ENCODE measurements at regions of chr3 and their contacts with region 1.

Region 1: DNA sequence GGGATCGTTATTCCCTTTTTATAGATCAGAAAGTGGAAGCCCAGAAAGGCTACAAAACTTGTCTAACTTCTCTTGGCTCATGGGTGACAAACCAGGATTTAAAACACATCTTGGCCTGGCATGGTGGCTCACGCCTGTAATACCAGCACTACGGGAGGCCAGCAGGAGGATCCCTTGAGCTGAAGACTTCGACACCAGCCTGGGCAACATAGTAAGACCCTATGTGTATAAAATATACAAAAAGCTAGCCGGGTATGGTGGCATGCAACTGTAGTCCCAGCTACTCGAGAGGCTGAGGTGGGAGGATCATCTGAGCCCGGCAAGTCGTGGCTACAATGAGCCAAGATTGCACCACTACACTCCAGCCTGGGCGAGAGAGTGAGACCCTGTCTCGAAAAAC is 479.1 kb downstream of the MAGI1 start:
- DNase-seq: no peak
- H3K4me3 ChIP-seq: no peak overlapping the region
- H3K27ac ChIP-seq: no peak overlapping the region
- H3K4me1 ChIP-seq: peaks cover 3% of the 10 kb centered on the region
- H3K27me3 ChIP-seq: no peaks in the 10 kb centered on the region
- CTCF ChIP-seq: no peak
- POLR2A ChIP-seq: no peak

Region 2: GRCh38 chr3:65569845-65570405 is 10.3 kb after region 1 on chr3:
- CTCF ChIA-PET with region 1: interaction called, 11 read pairs
- POLR2A ChIA-PET with region 1: no interaction called
- dilution Hi-C with region 1: no loop called
- intact Hi-C with region 1: no loop called
- DNase-seq: no peak
- H3K4me3 ChIP-seq: no peak overlapping the region
- H3K27ac ChIP-seq: no peak overlapping the region
- H3K4me1 ChIP-seq: no peaks in the 10 kb centered on the region
- H3K27me3 ChIP-seq: no peaks in the 10 kb centered on the region
- CTCF ChIP-seq: no peak
- POLR2A ChIP-seq: no peak

Region 3: GRCh38 chr3:65597226-65597951 is 37.7 kb after region 1 on chr3:
- CTCF ChIA-PET with region 1: no interaction called
- POLR2A ChIA-PET with region 1: no interaction called
- dilution Hi-C with region 1: no loop called
- intact Hi-C with region 1: no loop called
- DNase-seq: peak; percentile 12
- H3K4me3 ChIP-seq: no peak overlapping the region
- H3K27ac ChIP-seq: no peak overlapping the region
- H3K4me1 ChIP-seq: peaks cover 4% of the 10 kb centered on the region
- H3K27me3 ChIP-seq: peaks cover 18 to 23% of the 10 kb centered on the region in 2 experiments
- CTCF ChIP-seq: no peak
- POLR2A ChIP-seq: no peak